Activated CD4-positive, alpha-beta T cell treated with anti-CD3 and anti-CD28 coated beads, Interleukin-2, amount 10 ng/mL, durations not matched to agents 24 days and 14 days (primary cell): ENCODE measurements at regions of chr13 and their contacts with region 1.

Region 1: DNA sequence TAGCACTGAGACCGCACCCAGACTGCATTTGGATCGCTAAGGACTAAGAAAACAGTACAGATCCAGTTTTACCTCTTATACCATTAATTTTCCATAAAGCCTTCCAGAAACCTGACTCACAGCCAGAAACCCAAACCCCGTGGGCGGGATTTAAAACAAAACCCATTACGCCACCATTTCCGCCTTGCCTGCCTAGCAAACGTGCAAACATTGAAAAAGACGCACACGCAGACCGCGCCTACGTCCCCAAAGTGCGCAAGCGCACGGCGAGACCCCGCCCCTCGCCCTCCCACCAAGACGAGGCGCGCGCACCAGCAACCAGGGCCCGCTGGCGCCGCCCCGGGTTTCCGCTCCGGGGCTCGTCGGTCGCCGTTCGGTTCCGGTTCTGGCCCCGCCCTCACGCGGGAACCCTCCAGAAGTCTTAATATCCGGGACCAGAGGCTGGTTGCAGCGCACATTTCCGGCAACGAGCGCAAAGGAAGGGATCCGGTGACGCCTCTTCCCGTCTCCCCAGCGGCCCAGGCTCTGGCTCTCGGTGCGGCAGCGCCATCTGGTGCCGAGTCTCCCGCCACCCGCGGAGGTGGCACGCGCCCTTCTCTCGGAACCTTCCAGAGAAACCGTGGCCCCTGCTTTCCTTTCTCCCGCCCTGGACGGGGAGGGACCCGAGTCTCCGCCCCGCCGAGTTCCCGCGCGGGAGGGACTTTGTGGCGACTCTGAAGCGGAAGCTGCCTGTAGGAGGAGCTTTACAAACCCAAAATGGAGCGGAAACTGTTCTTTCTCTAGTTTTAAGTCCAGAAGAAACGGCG is 256.9 kb upstream of the STARD13 start:
- DNase-seq: peak; percentile 100
- H3K4me3 Mint-ChIP-seq: peak overlapping the region; percentile 90
- H3K27ac Mint-ChIP-seq: peak overlapping the region; percentile 99
- H3K4me1 Mint-ChIP-seq: peaks cover 37% of the 10 kb centered on the region
- H3K27me3 Mint-ChIP-seq: peaks cover 2% of the 10 kb centered on the region

Region 2: DNA sequence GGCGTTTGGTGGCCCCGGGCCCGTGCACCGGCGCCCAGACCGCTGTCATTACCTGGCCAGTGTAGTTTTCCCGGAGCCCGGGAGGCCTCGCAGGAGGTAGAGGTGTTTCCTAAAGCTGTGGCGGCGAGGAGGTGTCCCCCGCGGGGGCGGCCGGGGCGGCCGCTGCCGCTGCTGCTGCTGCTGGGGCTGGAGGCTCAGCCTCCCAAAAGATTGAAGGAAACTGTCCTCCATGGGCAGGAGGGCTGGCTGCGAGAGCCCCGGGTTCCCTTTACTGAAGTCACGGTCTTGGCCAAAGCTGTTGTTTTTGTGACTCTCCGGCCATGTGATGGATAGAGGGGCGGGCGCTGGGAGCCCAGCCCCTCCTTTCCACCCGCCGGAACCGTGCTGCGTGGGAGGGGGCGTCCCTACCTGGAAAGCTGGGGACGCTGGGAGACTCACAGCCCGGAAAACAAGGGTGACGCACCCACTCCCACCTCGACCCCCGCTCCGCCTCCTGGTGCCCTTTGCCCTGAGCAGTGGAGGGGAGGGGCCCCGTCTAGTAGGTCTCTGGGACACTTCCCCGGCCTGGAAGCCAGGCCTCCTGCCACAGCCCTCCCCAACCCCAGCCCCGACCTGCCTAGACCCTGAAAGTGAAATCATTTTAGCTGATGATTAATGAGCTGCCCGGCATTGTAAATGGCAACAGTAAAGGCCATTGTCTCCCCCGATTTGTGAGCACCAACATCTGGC is 1114.5 kb before region 1 on chr13 and contains the start of gene N4BP2L1:
- intact Hi-C with region 1: loop called (anchors 1 kb)
- DNase-seq: peak; percentile 94
- H3K4me3 Mint-ChIP-seq: peak within 1 kb of the TSS; percentile 99
- H3K27ac Mint-ChIP-seq: peak within 1 kb of the TSS; percentile 98
- H3K4me1 Mint-ChIP-seq: peaks cover 44% of the 10 kb centered on the region
- H3K27me3 Mint-ChIP-seq: no peaks in the 10 kb centered on the region
- total RNA-seq, gene N4BP2L1: 16.6 and 17.9 TPM in 2 replicates

Region 3: GRCh38 chr13:32917504-32917903 is 625.0 kb before region 1 on chr13:
- intact Hi-C with region 1: loop called (anchors 1 kb)
- DNase-seq: no peak
- H3K4me3 Mint-ChIP-seq: no peak overlapping the region
- H3K27ac Mint-ChIP-seq: peak overlapping the region; percentile 57
- H3K4me1 Mint-ChIP-seq: peaks cover 10% of the 10 kb centered on the region
- H3K27me3 Mint-ChIP-seq: no peaks in the 10 kb centered on the region

Region 4: DNA sequence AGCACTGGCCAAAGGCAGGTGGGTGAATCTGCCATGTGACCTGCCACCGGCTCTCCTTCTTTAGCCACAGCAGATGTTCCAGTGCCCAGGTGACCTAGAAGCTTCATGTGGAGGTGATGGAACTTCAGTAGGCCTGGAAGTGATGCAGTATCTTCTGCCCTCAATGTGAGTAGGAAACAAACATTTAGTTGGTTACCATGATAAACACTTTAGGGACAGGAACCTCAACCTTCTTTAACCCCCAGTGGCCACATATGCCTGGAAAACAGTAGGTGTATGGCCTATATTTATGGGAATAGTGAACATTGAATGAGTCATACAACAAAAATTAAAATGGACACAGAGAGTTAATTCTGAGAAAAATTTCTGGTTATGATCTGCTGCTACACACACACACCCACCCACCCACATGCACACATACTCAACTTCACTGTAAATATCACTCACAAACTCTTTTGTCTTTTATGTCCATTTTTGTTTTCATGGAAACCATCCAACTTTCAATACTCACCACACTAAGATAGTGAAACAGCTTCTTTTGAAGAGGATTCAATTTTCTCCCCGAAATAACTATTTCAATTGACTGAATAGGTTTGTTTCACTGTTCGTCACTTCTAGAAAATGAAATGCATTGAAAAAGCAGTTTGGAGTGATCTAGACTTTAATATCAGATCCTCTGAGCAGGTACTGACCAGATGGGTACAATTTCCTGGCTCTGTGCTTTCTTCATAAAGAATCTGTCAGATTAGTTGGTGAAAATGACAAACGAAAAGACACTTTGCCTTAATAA is 354.2 kb before region 1 on chr13:
- intact Hi-C with region 1: loop called (anchors 1 kb)
- DNase-seq: peak; percentile 59
- H3K4me3 Mint-ChIP-seq: peak overlapping the region; percentile 13
- H3K27ac Mint-ChIP-seq: peak overlapping the region; percentile 99
- H3K4me1 Mint-ChIP-seq: peaks cover 41% of the 10 kb centered on the region
- H3K27me3 Mint-ChIP-seq: no peaks in the 10 kb centered on the region

Region 5: DNA sequence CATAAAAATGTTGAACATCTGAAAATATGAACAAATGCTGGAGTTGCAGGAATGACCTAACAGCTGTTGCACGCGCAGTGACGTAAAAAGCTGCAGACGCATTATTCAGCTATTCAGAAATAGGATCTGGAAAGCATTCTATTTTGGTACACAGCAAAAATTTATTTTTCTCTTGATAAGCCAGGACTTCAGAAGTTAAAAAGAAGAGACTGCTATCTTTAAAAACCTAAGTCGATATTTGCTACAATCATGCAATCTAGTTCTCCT is 220.0 kb before region 1 on chr13:
- intact Hi-C with region 1: no loop called
- DNase-seq: no peak
- H3K4me3 Mint-ChIP-seq: no peak overlapping the region
- H3K27ac Mint-ChIP-seq: no peak overlapping the region
- H3K4me1 Mint-ChIP-seq: no peaks in the 10 kb centered on the region
- H3K27me3 Mint-ChIP-seq: peaks cover 2% of the 10 kb centered on the region

Region 6: DNA sequence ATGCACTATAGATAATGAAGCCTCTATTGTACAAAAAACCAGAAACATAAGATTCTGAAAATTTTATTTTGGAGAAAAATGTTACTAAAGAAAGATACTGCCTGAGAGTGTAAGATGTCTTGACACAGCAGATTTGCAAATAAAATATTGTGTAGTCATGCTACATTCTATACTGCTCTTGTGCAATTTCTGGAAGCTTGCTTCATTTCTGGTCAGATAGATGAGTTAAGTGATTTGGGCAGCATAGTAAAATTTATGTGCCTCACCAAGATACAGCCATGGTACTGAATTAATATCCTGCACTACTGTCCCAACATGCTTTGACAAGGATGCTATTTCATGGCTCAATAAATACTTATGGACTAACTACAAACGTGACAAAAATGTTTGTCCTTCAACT is 201.9 kb before region 1 on chr13:
- intact Hi-C with region 1: no loop called
- DNase-seq: no peak
- H3K4me3 Mint-ChIP-seq: no peak overlapping the region
- H3K27ac Mint-ChIP-seq: no peak overlapping the region
- H3K4me1 Mint-ChIP-seq: no peaks in the 10 kb centered on the region
- H3K27me3 Mint-ChIP-seq: peaks cover 5% of the 10 kb centered on the region

Region 7: DNA sequence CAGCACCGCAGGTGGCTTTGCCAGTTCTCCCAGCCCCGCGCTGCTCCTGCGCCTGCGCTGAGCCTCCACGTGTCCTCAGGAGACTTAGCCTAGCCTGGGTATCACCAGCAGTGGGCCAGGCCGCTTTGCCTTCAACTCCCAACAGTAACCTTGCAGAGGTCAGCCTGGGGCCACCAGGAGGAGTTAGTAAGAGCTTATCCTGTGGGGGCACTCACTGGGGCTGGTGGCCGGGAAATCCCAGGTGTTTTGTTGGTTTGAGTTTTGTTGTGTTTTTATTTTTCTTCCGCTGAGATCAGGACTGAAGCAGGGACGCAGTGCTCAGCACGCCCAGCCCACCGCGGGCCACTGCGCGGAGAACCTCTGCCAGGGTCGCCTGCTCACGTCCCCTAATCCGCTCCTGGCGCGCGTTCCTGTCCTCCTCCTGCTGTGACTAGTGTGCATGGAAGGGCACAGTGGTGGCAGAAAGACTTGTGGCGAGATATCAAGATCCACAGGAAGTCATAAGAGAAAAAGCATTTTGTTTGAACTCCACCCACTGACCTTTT is 68.1 kb after region 1 on chr13:
- intact Hi-C with region 1: loop called (anchors 1 kb)
- DNase-seq: peak; percentile 79
- H3K4me3 Mint-ChIP-seq: peak overlapping the region; percentile 89
- H3K27ac Mint-ChIP-seq: peak overlapping the region; percentile 87
- H3K4me1 Mint-ChIP-seq: peaks cover 38% of the 10 kb centered on the region
- H3K27me3 Mint-ChIP-seq: no peaks in the 10 kb centered on the region

Region 8: GRCh38 chr13:33817901-33818706 is 275.6 kb after region 1 on chr13 and contains the start of gene RFC3:
- intact Hi-C with region 1: loop called (anchors 1 kb)
- DNase-seq: peak; percentile 98
- H3K4me3 Mint-ChIP-seq: peak within 1 kb of the TSS; percentile 93
- H3K27ac Mint-ChIP-seq: peak within 1 kb of the TSS; percentile 95
- H3K4me1 Mint-ChIP-seq: peaks cover 30% of the 10 kb centered on the region
- H3K27me3 Mint-ChIP-seq: no peaks in the 10 kb centered on the region
- total RNA-seq, gene RFC3: 77.8 and 81.0 TPM in 2 replicates

Region 9: GRCh38 chr13:33884531-33885220 is 342.2 kb after region 1 on chr13:
- intact Hi-C with region 1: no loop called
- DNase-seq: no peak
- H3K4me3 Mint-ChIP-seq: no peak overlapping the region
- H3K27ac Mint-ChIP-seq: no peak overlapping the region
- H3K4me1 Mint-ChIP-seq: no peaks in the 10 kb centered on the region
- H3K27me3 Mint-ChIP-seq: no peaks in the 10 kb centered on the region